Natural killer cell (primary cell): ENCODE measurements at regions of chr1 and their contacts with region 1.

Region 1: GRCh38 chr1:114511032-114511785 is at the start of gene TRIM33:
- DNase-seq: peak; percentile 91 to 98
- ATAC-seq: peak; percentile 76 to 93 (median 81)
- H3K4me3 ChIP-seq: peak within 1 kb of the TSS; percentile 89
- H3K4me3 Mint-ChIP-seq: peak within 1 kb of the TSS; percentile 100
- H3K27ac ChIP-seq: peak within 1 kb of the TSS; percentile 92
- H3K27ac Mint-ChIP-seq: peak within 1 kb of the TSS; percentile 100
- H3K4me1 ChIP-seq: peaks cover 30% of the 10 kb centered on the region
- H3K4me1 Mint-ChIP-seq: peaks cover 48 to 57% of the 10 kb centered on the region in 2 donors
- H3K27me3 ChIP-seq: no peaks in the 10 kb centered on the region
- H3K27me3 Mint-ChIP-seq: no peaks in the 10 kb centered on the region
- CTCF ChIP-seq: no peak
- total RNA-seq, gene TRIM33: 70.6 to 91.5 (median 86.1) TPM

Region 2: GRCh38 chr1:113978863-113979702 is 532.1 kb before region 1 on chr1 and contains the start of gene OLFML3:
- intact Hi-C with region 1: loop called (anchors 5 kb)
- DNase-seq: peak; percentile 49 to 70
- ATAC-seq: peak; percentile 27 to 42 (median 37)
- H3K4me3 ChIP-seq: no peak within 1 kb of the TSS
- H3K4me3 Mint-ChIP-seq: peak within 1 kb of the TSS; percentile 42
- H3K27ac ChIP-seq: no peak within 1 kb of the TSS
- H3K27ac Mint-ChIP-seq: peak within 1 kb of the TSS; percentile 49 to 83
- H3K4me1 ChIP-seq: peaks cover 35% of the 10 kb centered on the region
- H3K4me1 Mint-ChIP-seq: peaks cover 54 to 65% of the 10 kb centered on the region in 2 donors
- H3K27me3 ChIP-seq: no peaks in the 10 kb centered on the region
- H3K27me3 Mint-ChIP-seq: no peaks in the 10 kb centered on the region
- CTCF ChIP-seq: peak; percentile 76
- total RNA-seq, gene OLFML3: 0.16 TPM in 1 of 3 donors, not detected in the others

Region 3: DNA sequence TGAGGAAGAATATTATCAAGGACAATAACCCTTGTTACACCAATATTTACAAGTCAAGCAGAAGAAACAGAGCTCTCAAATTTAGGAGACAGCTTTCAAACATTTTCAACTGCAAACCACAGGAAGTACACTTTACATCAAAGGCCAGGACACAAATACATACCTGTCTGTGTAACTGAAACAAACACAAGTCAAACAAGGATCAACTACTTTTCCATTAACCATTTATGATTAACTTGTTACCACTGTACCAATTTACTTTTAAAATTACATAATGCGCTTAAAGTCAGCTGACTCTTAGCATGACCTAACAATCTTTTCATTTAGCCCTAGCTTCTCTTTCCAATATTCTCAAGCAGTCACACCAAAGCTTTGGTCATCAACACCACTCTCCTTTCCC is 43.7 kb before region 1 on chr1:
- intact Hi-C with region 1: loop called (anchors 5 kb)
- DNase-seq: peak in 1 of 2 donors; percentile 25
- ATAC-seq: peak in 2 of 3 donors; percentile 29 to 31
- H3K4me3 ChIP-seq: no peak overlapping the region
- H3K4me3 Mint-ChIP-seq: peak overlapping the region; percentile 38
- H3K27ac ChIP-seq: no peak overlapping the region
- H3K27ac Mint-ChIP-seq: peak overlapping the region; percentile 80 to 82
- H3K4me1 ChIP-seq: peaks cover 14% of the 10 kb centered on the region
- H3K4me1 Mint-ChIP-seq: peaks cover 56 to 67% of the 10 kb centered on the region in 2 donors
- H3K27me3 ChIP-seq: no peaks in the 10 kb centered on the region
- H3K27me3 Mint-ChIP-seq: no peaks in the 10 kb centered on the region
- CTCF ChIP-seq: no peak

Region 4: GRCh38 chr1:114479134-114479533 is 32.1 kb before region 1 on chr1:
- intact Hi-C with region 1: loop called (anchors 5 kb)
- DNase-seq: no peak
- ATAC-seq: no peak
- H3K4me3 ChIP-seq: no peak overlapping the region
- H3K4me3 Mint-ChIP-seq: peak overlapping the region; percentile 49
- H3K27ac ChIP-seq: no peak overlapping the region
- H3K27ac Mint-ChIP-seq: peak overlapping the region; percentile 56 to 63
- H3K4me1 ChIP-seq: peaks cover 14% of the 10 kb centered on the region
- H3K4me1 Mint-ChIP-seq: peaks cover 70 to 74% of the 10 kb centered on the region in 2 donors
- H3K27me3 ChIP-seq: no peaks in the 10 kb centered on the region
- H3K27me3 Mint-ChIP-seq: no peaks in the 10 kb centered on the region
- CTCF ChIP-seq: no peak

Region 5: GRCh38 chr1:114488749-114489148 is 22.5 kb before region 1 on chr1:
- intact Hi-C with region 1: loop called (anchors 2 kb)
- DNase-seq: peak in 1 of 2 donors; percentile 20
- ATAC-seq: peak in 2 of 3 donors; percentile 44 to 58
- H3K4me3 ChIP-seq: no peak overlapping the region
- H3K4me3 Mint-ChIP-seq: peak overlapping the region; percentile 26
- H3K27ac ChIP-seq: no peak overlapping the region
- H3K27ac Mint-ChIP-seq: peak overlapping the region; percentile 79 to 86
- H3K4me1 ChIP-seq: peaks cover 14% of the 10 kb centered on the region
- H3K4me1 Mint-ChIP-seq: peaks cover 71 to 75% of the 10 kb centered on the region in 2 donors
- H3K27me3 ChIP-seq: no peaks in the 10 kb centered on the region
- H3K27me3 Mint-ChIP-seq: no peaks in the 10 kb centered on the region
- CTCF ChIP-seq: no peak

Region 6: GRCh38 chr1:114581335-114582287 is 70.4 kb after region 1 on chr1 and contains the start of gene BCAS2:
- intact Hi-C with region 1: loop called (anchors 1 kb)
- DNase-seq: peak; percentile 91 to 99
- ATAC-seq: peak; percentile 93 to 97 (median 95)
- H3K4me3 ChIP-seq: peak within 1 kb of the TSS; percentile 75
- H3K4me3 Mint-ChIP-seq: peak within 1 kb of the TSS; percentile 96
- H3K27ac ChIP-seq: peak within 1 kb of the TSS; percentile 95
- H3K27ac Mint-ChIP-seq: peak within 1 kb of the TSS; percentile 98 to 99
- H3K4me1 ChIP-seq: peaks cover 8% of the 10 kb centered on the region
- H3K4me1 Mint-ChIP-seq: peaks cover 30 to 33% of the 10 kb centered on the region in 2 donors
- H3K27me3 ChIP-seq: peaks cover 4% of the 10 kb centered on the region
- H3K27me3 Mint-ChIP-seq: peaks cover 4 to 21% of the 10 kb centered on the region in 2 donors
- CTCF ChIP-seq: no peak
- total RNA-seq, gene BCAS2: 45.5 to 76.7 (median 62.0) TPM